CD4-positive, alpha-beta memory T cell (primary cell): ENCODE measurements at regions of chr1 and their contacts with region 1.

Region 1: DNA sequence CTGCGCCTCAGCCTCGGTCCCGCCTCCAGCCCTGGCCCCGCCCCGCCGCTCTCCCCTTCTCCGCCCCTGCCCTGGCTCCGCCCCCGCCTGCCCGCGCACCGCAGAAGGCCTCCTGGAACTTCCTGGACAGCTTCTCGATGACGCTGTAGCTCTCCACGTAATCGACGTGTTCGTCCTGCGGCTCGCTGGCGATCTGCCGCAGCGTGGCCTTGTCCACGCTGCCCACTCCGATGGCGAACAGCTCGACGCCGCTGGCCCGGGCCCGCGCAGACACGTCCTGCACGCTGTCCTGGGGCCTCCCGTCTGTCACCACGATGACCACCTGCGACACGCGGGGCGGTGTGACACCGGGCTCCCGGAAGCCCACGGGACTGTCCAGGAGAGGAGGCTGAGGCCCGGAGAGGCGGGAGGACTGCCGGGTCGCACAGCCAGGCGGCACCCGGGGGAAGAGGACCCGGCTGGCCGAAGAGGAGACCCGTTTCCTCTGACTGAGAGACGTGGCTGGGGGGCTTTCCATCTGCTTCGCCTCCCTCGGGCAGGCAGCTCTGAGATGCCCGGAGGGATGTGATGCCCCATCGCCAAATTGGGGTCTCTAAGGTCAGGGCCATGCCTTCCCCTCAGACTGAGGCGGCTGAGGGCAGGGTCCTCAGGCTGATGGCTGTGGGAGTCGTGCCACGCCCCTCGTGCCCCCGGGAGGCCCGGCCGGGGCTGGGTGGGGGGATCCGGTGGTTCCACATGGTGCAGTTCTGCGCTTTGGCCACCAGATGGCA is 4.6 kb downstream of the MATN1 start:
- DNase-seq: peak; percentile 79 to 97 (median 96)
- H3K4me3 ChIP-seq: peak overlapping the region; percentile 85 to 94
- H3K4me3 Mint-ChIP-seq: peak overlapping the region; percentile 79 to 94 (median 84)
- H3K27ac ChIP-seq: peak overlapping the region; percentile 100
- H3K27ac Mint-ChIP-seq: peak overlapping the region; percentile 91 to 99 (median 96)
- H3K4me1 ChIP-seq: peaks cover 36% of the 10 kb centered on the region
- H3K4me1 Mint-ChIP-seq: peaks cover 15 to 45% (median 29%) of the 10 kb centered on the region in 4 donors
- H3K27me3 ChIP-seq: no peaks in the 10 kb centered on the region
- H3K27me3 Mint-ChIP-seq: no peaks in the 10 kb centered on the region

Region 2: DNA sequence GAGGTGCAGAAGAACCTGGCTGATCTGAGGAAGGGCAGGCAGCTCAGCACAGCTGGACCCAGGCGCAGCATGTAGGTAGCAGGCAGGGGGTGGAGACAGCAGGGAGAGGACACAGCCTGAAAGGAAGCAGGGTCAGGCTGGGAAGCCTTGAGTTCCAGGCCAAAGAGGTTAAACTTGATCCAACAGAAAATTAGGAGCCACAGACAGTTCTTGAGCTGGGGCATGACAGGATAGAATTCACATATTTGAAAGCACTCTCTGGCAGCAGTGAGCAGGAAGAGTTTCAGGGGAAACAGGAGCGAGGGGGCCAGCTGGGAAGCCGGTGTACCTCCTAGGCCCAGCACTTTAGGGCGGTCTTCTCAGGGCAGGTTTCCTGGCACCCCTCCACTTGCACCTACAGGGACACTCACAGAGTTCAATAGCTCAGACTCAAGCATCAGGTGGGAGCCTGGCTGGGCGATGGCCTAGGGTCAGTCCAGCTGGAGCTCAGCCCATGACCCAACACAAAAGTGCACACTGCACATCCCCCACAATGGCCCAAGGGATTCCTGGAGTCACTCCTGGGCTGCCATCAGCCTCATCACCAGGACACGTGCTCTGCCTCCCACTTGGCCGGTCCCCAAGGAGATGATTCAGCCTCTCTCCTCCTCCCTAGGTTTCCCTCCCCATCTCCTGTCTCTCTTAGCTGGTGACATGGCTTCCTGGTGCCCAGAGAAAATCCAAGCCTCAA is 18.1 kb before region 1 on chr1:
- CTCF ChIA-PET with region 1: no interaction called
- POLR2A ChIA-PET with region 1: no interaction called
- intact Hi-C with region 1: no loop called
- DNase-seq: no peak
- H3K4me3 ChIP-seq: no peak overlapping the region
- H3K4me3 Mint-ChIP-seq: no peak overlapping the region
- H3K27ac ChIP-seq: no peak overlapping the region
- H3K27ac Mint-ChIP-seq: no peak overlapping the region
- H3K4me1 ChIP-seq: no peaks in the 10 kb centered on the region
- H3K4me1 Mint-ChIP-seq: no peaks in the 10 kb centered on the region
- H3K27me3 ChIP-seq: no peaks in the 10 kb centered on the region
- H3K27me3 Mint-ChIP-seq: peaks cover 3 to 4% of the 10 kb centered on the region in 2 donors

Region 3: DNA sequence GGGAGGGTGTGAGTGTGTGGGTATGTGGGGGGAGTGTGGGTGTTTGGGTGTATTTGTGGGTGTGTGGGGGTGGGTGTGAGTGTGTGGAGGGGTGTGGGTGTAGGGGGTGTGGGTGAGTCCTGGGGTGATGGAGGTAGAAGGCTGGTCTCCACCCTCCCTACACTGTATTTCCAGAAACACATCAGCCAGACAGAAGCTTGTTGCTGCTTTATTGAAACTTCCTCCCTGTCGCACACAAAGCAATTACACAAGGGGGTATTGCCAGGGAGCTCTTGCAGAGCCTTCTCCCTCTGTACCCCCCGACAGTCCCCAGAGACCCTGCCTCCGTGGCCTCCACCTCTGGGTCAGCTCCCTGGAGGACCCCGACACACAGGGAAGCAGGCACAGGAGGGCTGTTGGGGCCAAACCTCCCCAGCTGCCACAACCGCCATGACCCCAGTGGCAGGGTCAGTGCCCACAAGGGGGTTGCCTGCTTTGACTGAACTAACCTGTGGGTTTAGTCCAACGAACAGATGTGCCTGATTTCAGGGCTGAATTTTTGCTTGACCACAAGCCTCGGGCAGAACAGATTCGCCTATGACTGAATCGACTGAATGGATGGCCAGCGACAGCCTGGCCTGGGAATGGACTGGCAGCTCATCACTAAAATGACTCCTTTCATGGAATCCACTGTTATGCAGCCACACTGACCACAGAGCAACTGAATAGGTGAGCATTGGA is 13.6 kb after region 1 on chr1:
- CTCF ChIA-PET with region 1: interaction called, 27 read pairs
- POLR2A ChIA-PET with region 1: interaction called, 23 read pairs
- intact Hi-C with region 1: no loop called
- DNase-seq: peak in 1 of 5 donors; percentile 54
- H3K4me3 ChIP-seq: no peak overlapping the region
- H3K4me3 Mint-ChIP-seq: peak overlapping the region in 2 of 8 donors; percentile 25 to 26
- H3K27ac ChIP-seq: no peak overlapping the region
- H3K27ac Mint-ChIP-seq: peak overlapping the region; percentile 5 to 83 (median 74)
- H3K4me1 ChIP-seq: peaks cover 16% of the 10 kb centered on the region
- H3K4me1 Mint-ChIP-seq: peaks cover 8 to 32% (median 22%) of the 10 kb centered on the region in 4 donors
- H3K27me3 ChIP-seq: no peaks in the 10 kb centered on the region
- H3K27me3 Mint-ChIP-seq: no peaks in the 10 kb centered on the region

Region 4: DNA sequence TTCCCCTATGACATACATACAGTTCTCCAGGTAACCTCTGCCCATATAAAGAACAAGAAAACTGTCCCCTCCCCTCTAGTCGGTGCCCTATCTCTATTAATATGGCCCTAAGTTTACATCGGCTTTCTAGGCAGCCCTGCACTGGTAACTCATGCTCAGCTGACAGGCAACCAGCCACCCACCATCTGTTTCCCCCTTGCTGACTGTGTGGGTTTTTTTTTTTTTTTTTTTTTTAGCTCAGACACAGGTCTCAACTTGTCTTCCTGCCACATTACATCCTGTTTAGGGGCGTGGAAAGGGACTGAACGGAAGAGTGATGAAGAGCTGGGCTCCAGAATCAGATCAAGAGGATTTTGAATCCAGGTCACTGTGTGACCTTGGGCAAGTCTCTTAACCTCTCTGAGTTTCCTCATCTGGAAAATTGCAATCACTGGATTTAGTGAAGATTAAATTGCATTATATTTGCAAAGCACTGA is 24.8 kb after region 1 on chr1:
- CTCF ChIA-PET with region 1: interaction called, 85 read pairs
- POLR2A ChIA-PET with region 1: interaction called, 1,160 read pairs
- intact Hi-C with region 1: loop called (anchors 1 kb)
- DNase-seq: peak; percentile 81 to 92 (median 86)
- H3K4me3 ChIP-seq: peak overlapping the region; percentile 30 to 48
- H3K4me3 Mint-ChIP-seq: peak overlapping the region; percentile 77 to 98 (median 89)
- H3K27ac ChIP-seq: peak overlapping the region; percentile 92
- H3K27ac Mint-ChIP-seq: peak overlapping the region; percentile 95 to 99 (median 98)
- H3K4me1 ChIP-seq: peaks cover 96% of the 10 kb centered on the region
- H3K4me1 Mint-ChIP-seq: peaks cover 77 to 99% (median 85%) of the 10 kb centered on the region in 4 donors
- H3K27me3 ChIP-seq: no peaks in the 10 kb centered on the region
- H3K27me3 Mint-ChIP-seq: no peaks in the 10 kb centered on the region

Region 5: GRCh38 chr1:30756545-30757195 is 37.8 kb after region 1 on chr1:
- CTCF ChIA-PET with region 1: interaction called, 95 read pairs
- POLR2A ChIA-PET with region 1: interaction called, 1,160 read pairs
- intact Hi-C with region 1: loop called (anchors 1 kb)
- DNase-seq: peak; percentile 69 to 94 (median 75)
- H3K4me3 ChIP-seq: peak overlapping the region; percentile 96
- H3K4me3 Mint-ChIP-seq: peak overlapping the region; percentile 97 to 100 (median 100)
- H3K27ac ChIP-seq: peak overlapping the region; percentile 92
- H3K27ac Mint-ChIP-seq: peak overlapping the region; percentile 95 to 100 (median 98)
- H3K4me1 ChIP-seq: peaks cover 84% of the 10 kb centered on the region
- H3K4me1 Mint-ChIP-seq: peaks cover 57 to 100% (median 69%) of the 10 kb centered on the region in 4 donors
- H3K27me3 ChIP-seq: no peaks in the 10 kb centered on the region
- H3K27me3 Mint-ChIP-seq: no peaks in the 10 kb centered on the region

Region 6: GRCh38 chr1:30911046-30911954 is 192.5 kb after region 1 on chr1:
- CTCF ChIA-PET with region 1: interaction called, 5 read pairs
- POLR2A ChIA-PET with region 1: interaction called, 8 read pairs
- intact Hi-C with region 1: loop called (anchors 1 kb)
- DNase-seq: peak in 3 of 5 donors; percentile 27 to 32 (median 32)
- H3K4me3 ChIP-seq: no peak overlapping the region
- H3K4me3 Mint-ChIP-seq: peak overlapping the region in 3 of 8 donors; percentile 14 to 36 (median 21)
- H3K27ac ChIP-seq: no peak overlapping the region
- H3K27ac Mint-ChIP-seq: no peak overlapping the region
- H3K4me1 ChIP-seq: peaks cover 15% of the 10 kb centered on the region
- H3K4me1 Mint-ChIP-seq: peaks cover 9 to 19% (median 14%) of the 10 kb centered on the region in 4 donors
- H3K27me3 ChIP-seq: peaks cover 17% of the 10 kb centered on the region
- H3K27me3 Mint-ChIP-seq: peaks cover 9 to 18% of the 10 kb centered on the region in 2 donors

Region 7: DNA sequence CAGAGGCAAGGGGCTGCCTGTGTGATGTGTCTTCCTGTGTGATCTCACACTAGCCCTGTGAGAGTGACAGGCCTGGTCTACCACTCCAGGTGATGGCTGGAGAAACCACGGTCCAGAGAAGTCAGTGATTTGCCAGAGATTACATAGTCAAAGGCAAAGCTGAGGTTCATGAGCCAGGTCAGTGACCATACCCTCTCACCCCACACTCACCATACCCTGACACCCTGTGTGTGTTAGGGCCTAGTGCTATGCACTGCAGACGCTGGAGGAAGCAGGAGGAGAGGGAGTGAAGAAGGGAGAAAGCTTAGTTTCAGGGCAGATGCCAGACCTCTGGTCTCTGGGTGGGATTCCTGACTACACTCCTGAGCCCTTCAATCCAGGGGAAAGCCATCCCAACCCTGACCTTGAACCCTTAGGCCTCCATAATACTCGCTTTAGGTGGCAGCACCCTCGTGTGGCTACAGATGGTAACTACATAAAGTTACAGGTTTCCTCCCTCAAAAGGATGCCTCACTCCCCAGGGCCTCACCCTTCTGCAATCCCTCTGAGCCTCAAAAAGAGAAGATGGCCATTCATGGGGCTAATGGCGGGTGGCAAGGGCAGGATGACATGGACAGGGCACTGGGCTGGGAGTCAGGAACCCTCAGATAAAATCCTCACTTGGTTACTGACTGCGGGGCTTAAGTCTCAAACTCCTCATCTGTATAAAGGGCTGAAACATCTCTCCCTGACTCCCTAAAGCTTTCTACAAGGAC is 210.5 kb after region 1 on chr1:
- CTCF ChIA-PET with region 1: interaction called, 14 read pairs
- POLR2A ChIA-PET with region 1: interaction called, 4 read pairs
- intact Hi-C with region 1: loop called (anchors 2 kb)
- DNase-seq: peak in 4 of 5 donors; percentile 31 to 38 (median 36)
- H3K4me3 ChIP-seq: no peak overlapping the region
- H3K4me3 Mint-ChIP-seq: peak overlapping the region in 1 of 8 donors; percentile 44
- H3K27ac ChIP-seq: no peak overlapping the region
- H3K27ac Mint-ChIP-seq: peak overlapping the region in 3 of 7 donors; percentile 1 to 86 (median 82)
- H3K4me1 ChIP-seq: no peaks in the 10 kb centered on the region
- H3K4me1 Mint-ChIP-seq: peaks cover 0 to 1% (median 0%) of the 10 kb centered on the region in 4 donors
- H3K27me3 ChIP-seq: no peaks in the 10 kb centered on the region
- H3K27me3 Mint-ChIP-seq: peaks cover 0 to 2% of the 10 kb centered on the region in 2 donors

Region 8: GRCh38 chr1:31043631-31044030 is 324.8 kb after region 1 on chr1:
- CTCF ChIA-PET with region 1: no interaction called
- POLR2A ChIA-PET with region 1: no interaction called
- intact Hi-C with region 1: no loop called
- DNase-seq: no peak
- H3K4me3 ChIP-seq: no peak overlapping the region
- H3K4me3 Mint-ChIP-seq: peak overlapping the region in 1 of 8 donors; percentile 32
- H3K27ac ChIP-seq: no peak overlapping the region
- H3K27ac Mint-ChIP-seq: no peak overlapping the region
- H3K4me1 ChIP-seq: peaks cover 32% of the 10 kb centered on the region
- H3K4me1 Mint-ChIP-seq: peaks cover 34 to 60% (median 45%) of the 10 kb centered on the region in 4 donors
- H3K27me3 ChIP-seq: no peaks in the 10 kb centered on the region
- H3K27me3 Mint-ChIP-seq: no peaks in the 10 kb centered on the region

Region 9: GRCh38 chr1:31065310-31066217 is 346.7 kb after region 1 on chr1 and contains the start of gene PUM1:
- CTCF ChIA-PET with region 1: no interaction called
- POLR2A ChIA-PET with region 1: no interaction called
- intact Hi-C with region 1: loop called (anchors 1 kb)
- DNase-seq: peak; percentile 97 to 99 (median 98)
- H3K4me3 ChIP-seq: peak within 1 kb of the TSS; percentile 76 to 100
- H3K4me3 Mint-ChIP-seq: peak within 1 kb of the TSS; percentile 92 to 100 (median 98)
- H3K27ac ChIP-seq: peak within 1 kb of the TSS; percentile 99
- H3K27ac Mint-ChIP-seq: peak within 1 kb of the TSS; percentile 95 to 100 (median 99)
- H3K4me1 ChIP-seq: peaks cover 37% of the 10 kb centered on the region
- H3K4me1 Mint-ChIP-seq: peaks cover 13 to 49% (median 26%) of the 10 kb centered on the region in 4 donors
- H3K27me3 ChIP-seq: no peaks in the 10 kb centered on the region
- H3K27me3 Mint-ChIP-seq: no peaks in the 10 kb centered on the region
- total RNA-seq, gene PUM1: 146 to 164 TPM